Right ventricle myocardium superior (tissue), 1 donor: ENCODE measurements at regions of chr1 and their contacts with region 1.

Region 1: DNA sequence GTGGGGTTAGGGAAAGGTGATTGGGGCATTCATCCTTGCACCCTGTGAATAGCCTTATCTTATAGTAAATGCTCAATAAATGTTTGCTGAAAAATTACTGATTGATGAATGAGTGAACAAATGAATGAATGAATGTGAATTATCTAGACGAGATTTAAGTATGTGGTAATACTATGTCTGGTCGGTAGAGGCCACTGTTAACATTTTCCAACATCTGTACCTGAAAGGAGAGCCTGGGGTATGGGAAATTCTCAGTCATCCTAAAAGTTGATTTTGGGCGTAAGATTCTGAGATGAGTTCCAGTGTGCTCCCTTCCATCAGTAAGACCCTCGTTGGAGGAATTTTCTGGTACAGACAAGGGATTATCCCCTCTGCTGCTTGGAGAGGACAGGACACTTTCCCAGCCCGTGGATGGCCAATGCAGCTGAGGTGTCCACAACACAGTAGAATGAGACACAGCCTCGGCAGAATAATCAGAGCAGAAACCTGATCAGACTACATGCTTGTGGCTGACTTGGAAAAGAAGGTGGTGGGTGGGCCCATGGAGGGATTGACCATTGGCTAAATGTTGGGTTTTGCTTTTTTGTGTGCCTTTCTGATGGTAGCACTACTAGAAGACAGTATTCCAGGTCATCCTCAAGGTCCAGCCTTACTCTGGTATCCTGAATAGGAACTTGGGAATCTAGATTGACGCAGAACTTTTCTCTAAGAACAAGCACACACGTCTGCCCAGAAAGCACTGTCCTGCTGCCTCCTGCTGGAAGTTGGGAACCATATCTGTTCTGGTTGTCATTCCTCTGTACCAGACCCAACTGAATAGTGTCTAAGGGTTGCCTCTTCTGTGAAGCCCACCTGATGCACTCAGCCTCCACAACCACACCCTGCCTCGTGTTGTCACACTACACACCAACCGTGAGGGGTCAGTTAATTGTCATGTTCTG is 262.0 kb downstream of the TNR start:
- DNase-seq: no peak
- ATAC-seq: peak; percentile 57

Region 2: GRCh38 chr1:175887981-175888433 is 406.6 kb after region 1 on chr1:
- intact Hi-C with region 1: loop called (anchors 10 kb)
- DNase-seq: peak; percentile 64
- ATAC-seq: peak; percentile 95

Region 3: DNA sequence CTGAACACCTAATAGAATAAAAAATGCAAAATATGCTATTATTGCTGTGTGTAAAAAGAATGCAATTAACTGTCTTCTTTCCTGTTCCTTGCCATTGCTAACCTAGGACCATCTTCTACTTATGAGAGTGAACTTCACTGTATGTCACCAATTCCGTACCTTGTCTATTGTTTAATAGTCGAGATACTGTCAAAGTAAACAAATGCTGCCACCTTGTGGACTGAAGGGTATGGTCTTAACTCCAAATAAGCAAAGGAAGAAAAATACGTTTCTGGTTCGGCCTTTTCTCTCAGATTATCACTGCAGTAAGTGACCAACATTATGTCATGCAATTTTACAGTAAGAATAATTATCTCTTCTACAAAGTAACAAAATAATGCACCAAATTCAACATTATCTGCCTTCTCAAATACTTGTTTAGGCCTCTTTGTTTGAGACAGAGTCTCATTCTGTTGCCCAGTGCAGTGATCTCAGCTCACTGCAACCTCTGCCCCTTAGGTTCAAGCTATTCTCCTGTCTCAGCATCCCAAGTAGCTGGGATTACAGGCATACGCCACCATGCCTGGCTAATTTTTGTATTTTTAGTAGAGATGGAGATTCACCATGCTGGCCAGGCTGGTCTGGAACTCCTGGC is 592.2 kb after region 1 on chr1:
- intact Hi-C with region 1: loop called (anchors 5 kb)
- DNase-seq: no peak
- ATAC-seq: peak; percentile 68